Heart right ventricle (tissue), 16 donors: ENCODE measurements at regions of chr9 and their contacts with region 1.

Region 1: GRCh38 chr9:118829334-118829733 is 539.9 kb downstream of the BRINP1 start:
- DNase-seq: no peak
- ATAC-seq: no peak
- H3K4me3 ChIP-seq: no peak overlapping the region
- H3K27ac ChIP-seq: no peak overlapping the region
- H3K4me1 ChIP-seq: no peaks in the 10 kb centered on the region
- H3K27me3 ChIP-seq: no peaks in the 10 kb centered on the region
- CTCF ChIP-seq: peak; percentile 16 to 77 (median 52)

Region 2: DNA sequence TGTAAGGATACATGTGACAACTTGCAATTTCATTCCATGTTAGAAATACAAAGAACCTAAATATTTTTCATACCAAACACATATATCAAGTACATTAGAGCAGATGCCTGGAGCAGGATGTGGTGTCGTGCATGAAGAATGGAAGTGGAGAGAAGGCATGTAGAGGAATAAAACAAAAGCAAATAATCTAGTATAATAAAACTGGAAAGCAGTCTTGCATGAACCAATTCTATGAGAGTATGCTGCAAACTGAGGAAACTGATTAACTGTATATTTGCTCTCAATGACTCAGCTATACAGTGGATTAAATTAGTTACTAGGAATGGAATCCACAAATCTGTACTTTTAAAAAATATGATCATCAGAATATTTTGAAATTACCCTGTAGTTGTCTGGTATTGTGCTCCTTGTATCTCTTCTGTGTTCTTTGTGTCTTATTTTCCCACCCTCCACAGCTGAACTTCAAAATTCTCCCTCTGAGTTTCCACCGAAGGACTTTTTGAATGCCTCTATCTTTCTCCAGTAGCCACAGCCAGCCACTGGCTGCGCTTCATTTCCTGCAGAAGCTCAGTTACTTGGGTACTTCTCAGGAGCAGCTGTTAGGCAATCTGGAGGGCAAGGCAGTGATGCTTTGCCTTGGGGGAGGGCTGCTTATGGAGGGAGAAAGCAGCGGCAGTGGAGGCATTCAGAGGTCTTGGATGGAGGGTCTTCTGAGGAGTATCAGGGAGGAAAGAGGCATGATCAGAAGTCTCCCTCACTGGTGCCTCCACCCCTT is 68.1 kb before region 1 on chr9:
- intact Hi-C with region 1: no loop called
- DNase-seq: no peak
- ATAC-seq: no peak
- H3K4me3 ChIP-seq: no peak overlapping the region
- H3K27ac ChIP-seq: no peak overlapping the region
- H3K4me1 ChIP-seq: no peaks in the 10 kb centered on the region
- H3K27me3 ChIP-seq: no peaks in the 10 kb centered on the region
- CTCF ChIP-seq: no peak

Region 3: DNA sequence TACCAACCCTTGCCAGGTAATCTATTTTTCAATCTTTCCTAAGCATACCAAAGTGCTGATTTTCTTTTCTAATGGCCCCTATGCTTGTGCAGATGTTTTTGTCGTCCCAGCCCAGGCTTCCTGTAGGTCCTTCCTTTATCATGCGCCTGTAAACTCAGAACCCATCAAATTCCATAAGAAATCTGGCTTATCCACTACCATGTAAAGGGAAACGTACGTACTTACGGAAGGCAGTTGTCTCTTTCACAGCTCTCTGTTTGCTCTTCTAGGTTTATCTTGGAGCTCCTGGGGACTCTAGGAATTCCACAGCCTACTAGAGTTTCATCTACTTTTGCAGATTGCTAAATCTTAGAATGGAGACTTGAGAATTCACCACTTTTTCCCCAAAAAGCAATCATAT is 530.9 kb after region 1 on chr9:
- intact Hi-C with region 1: loop called in 8 of 10 experiments (anchors 1 to 10 kb)
- DNase-seq: no peak
- ATAC-seq: no peak
- H3K4me3 ChIP-seq: no peak overlapping the region
- H3K27ac ChIP-seq: no peak overlapping the region
- H3K4me1 ChIP-seq: peaks cover 0 to 5% (median 0%) of the 10 kb centered on the region in 9 donors
- H3K27me3 ChIP-seq: no peaks in the 10 kb centered on the region
- CTCF ChIP-seq: no peak